HepG2 (cell line): ENCODE measurements at regions of chr17 and their contacts with region 1.

Region 1: DNA sequence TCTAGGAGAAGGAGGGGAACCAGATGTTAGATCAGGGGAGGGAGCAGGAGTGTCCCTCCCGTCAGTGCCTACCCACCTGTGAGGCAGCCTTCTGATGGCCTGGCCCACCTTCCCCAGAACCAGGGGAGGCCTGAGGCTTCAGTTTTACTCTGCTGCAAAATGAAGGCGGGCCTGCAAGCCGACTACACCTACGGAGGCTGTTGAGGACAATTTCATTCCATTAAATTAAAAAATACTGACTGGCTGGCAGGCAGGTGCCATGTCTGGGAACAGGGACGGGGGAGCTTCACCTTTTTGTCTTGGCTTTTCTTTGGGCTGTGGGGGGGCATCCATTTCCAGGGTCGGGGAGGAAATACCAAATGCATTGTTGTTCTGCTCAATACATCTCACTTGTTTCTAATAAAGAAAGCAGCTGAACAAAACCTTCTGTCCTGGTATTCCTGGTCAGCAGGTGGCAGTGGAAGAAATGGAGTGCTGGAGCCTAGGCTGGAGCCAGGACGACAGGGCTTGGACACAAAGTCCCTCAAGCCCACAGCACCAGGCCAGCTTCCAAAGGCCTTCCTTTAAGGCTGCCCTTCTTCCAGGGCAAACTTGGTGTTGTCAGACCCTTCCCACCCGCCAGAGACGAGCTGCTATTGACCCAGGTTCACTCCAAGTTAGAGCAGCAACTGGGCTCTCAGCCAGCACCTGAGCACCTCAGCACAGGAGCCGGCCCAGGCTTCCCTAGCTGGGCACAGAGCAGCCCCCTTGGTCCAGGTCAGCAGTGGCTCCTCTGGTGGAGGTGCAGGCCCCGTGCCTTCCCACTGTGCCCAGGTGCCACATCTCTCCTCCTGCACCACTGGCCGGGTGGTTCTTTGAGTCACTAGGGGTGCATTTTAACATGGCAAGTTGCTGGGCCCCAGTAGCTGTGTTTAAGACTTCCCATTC is 23.5 kb downstream of the PLCD3 start:
- DNase-seq: no peak
- ATAC-seq: peak; percentile 21
- H3K4me3 ChIP-seq: no peak overlapping the region
- H3K27ac ChIP-seq: peak overlapping the region; percentile 4
- H3K4me1 ChIP-seq: peaks cover 45% of the 10 kb centered on the region
- H3K27me3 ChIP-seq: no peaks in the 10 kb centered on the region
- CTCF ChIP-seq: peak; percentile 58
- EP300 ChIP-seq: no peak
- POLR2A ChIP-seq: no peak
- RAD21 ChIP-seq: peak; percentile 60

Region 2: DNA sequence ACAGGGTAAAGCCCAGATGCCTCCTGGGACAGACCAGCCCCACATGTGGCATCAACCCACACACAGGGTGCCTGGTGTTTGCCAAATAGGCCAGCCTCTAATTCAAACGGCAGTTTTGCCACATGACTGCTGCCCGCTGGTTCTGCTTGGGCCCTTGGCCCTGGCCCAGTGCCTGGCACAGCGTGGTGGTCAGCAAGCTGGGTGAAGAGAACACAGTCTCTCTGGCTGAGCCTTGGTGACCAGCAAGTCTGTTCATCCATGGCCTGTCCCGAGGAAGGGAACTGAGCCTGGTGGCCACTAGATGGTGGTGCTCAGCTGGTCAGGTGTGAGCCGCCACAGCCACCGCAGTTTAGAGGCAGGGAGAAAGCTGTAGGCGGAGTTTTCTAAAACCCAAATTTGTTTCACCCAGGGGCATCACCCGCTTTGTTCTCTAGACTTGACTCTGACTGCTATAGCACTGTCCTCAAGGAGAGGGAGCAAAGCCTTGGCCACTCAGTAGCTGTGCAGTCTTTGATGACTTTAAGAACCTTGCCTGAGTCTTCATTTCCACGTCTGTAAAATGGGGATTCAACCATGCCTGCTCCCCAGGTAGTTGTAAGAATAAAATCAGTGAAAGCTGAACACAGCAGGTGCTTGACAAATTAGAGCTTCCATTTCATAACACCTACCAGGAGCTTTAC is 188.8 kb before region 1 on chr17:
- CTCF ChIA-PET with region 1: no interaction called
- POLR2A ChIA-PET with region 1: no interaction called
- in situ Hi-C with region 1: loop called (anchors 10 kb)
- intact Hi-C with region 1: no loop called
- DNase-seq: peak; percentile 73
- ATAC-seq: peak; percentile 81
- H3K4me3 ChIP-seq: no peak overlapping the region
- H3K27ac ChIP-seq: no peak overlapping the region
- H3K4me1 ChIP-seq: peaks cover 29% of the 10 kb centered on the region
- H3K27me3 ChIP-seq: peaks cover 9 to 30% of the 10 kb centered on the region in 2 experiments; a peak in 4 of 5 replicates
- CTCF ChIP-seq: peak; percentile 99
- EP300 ChIP-seq: no peak
- POLR2A ChIP-seq: no peak
- RAD21 ChIP-seq: peak; percentile 94

Region 3: DNA sequence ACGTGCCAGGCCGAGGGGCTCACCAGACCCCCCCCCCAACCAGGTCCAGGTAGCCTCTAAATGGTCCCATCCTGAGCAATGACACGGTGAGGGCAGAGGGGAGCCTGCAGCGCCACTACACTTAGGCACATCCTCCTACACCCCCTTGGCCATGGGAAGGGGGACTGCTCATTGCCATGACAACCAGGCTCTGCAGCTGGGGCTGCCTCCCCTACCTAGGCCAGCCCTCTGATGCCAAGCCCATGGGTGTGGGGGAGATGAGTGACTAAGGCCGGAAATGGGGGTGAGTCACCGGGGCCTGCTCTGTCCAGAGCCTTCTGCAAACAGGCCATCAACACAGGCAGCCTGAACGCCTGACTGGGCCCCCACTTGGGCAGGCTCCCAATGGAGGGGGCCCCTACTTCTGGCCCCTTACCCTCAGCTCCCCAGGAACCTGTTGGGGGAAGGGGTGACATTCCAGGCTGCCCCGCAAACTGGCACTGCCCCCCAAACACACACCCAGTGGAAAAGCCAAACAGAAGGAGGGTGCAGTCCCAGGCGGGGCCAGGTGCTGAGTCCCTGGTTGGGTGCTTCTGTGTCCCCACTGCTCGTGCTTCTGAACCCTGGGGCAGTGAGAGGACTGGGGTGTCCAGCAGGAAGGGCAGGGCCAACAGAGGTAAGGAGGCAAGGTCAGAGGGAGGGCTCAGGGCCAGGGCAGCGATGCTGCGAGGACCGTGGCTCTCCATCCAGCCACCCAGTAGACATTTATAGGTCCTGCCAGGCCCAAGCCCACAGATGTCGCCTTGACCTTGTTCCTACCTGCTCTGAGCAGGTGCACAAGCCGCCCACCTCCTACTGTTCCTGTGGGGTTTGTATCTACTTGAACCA is 15.3 kb after region 1 on chr17:
- CTCF ChIA-PET with region 1: no interaction called
- POLR2A ChIA-PET with region 1: interaction called, 14 read pairs
- in situ Hi-C with region 1: no loop called
- intact Hi-C with region 1: no loop called
- DNase-seq: peak; percentile 86
- ATAC-seq: peak; percentile 79
- H3K4me3 ChIP-seq: peak overlapping the region; percentile 19 to 60 (median 29); a peak in 2 of 6 replicates
- H3K27ac ChIP-seq: peak overlapping the region; percentile 63
- H3K4me1 ChIP-seq: peaks cover 67% of the 10 kb centered on the region
- H3K27me3 ChIP-seq: no peaks in the 10 kb centered on the region
- CTCF ChIP-seq: 0 out of 2 replicates have a peak, but pooled peaks have one; percentile 5
- EP300 ChIP-seq: peak; percentile 25 to 74; a peak in 2 of 4 replicates
- POLR2A ChIP-seq: no peak
- RAD21 ChIP-seq: 0 out of 2 replicates have a peak, but pooled peaks have one; percentile 10

Region 4: DNA sequence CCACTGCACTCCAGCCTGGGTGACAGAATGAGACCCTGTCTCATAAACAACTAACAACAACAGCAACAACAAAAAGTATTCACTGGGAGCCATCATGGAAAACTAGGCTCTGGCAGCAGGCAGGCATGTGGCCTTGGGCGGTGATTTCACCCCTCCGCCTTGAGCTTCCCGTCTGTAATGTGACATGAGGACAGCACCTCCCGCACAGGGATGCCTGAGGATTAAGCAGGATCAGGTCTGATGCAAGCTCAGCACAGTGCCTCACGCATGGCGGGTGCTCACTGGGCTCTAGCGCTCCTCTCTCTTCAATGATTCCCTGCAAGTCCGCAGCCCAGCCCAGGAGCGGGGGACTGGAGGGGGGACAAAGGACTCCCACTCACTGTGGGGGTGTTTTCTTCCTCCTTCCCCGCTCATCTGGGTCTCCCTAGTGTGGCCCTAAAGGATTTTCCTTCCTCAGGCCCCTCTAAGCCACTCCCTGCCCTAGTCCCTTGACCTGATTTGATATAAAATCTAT is 20.6 kb after region 1 on chr17:
- CTCF ChIA-PET with region 1: interaction called, 12 read pairs
- POLR2A ChIA-PET with region 1: interaction called, 14 read pairs
- in situ Hi-C with region 1: no loop called
- intact Hi-C with region 1: no loop called
- DNase-seq: peak; percentile 89
- ATAC-seq: peak; percentile 48
- H3K4me3 ChIP-seq: peak overlapping the region in 1 of 3 experiments; percentile 41; a peak in 2 of 6 replicates
- H3K27ac ChIP-seq: peak overlapping the region; percentile 63
- H3K4me1 ChIP-seq: peaks cover 70% of the 10 kb centered on the region
- H3K27me3 ChIP-seq: no peaks in the 10 kb centered on the region
- CTCF ChIP-seq: no peak
- EP300 ChIP-seq: peak in 1 of 2 experiments; percentile 24; a peak in 1 of 4 replicates
- POLR2A ChIP-seq: peak in 1 of 2 experiments; percentile 43; a peak in 1 of 4 replicates
- RAD21 ChIP-seq: no peak